ENCODE measurements at regions of chr22 and their contacts with region 1.

Region 1: DNA sequence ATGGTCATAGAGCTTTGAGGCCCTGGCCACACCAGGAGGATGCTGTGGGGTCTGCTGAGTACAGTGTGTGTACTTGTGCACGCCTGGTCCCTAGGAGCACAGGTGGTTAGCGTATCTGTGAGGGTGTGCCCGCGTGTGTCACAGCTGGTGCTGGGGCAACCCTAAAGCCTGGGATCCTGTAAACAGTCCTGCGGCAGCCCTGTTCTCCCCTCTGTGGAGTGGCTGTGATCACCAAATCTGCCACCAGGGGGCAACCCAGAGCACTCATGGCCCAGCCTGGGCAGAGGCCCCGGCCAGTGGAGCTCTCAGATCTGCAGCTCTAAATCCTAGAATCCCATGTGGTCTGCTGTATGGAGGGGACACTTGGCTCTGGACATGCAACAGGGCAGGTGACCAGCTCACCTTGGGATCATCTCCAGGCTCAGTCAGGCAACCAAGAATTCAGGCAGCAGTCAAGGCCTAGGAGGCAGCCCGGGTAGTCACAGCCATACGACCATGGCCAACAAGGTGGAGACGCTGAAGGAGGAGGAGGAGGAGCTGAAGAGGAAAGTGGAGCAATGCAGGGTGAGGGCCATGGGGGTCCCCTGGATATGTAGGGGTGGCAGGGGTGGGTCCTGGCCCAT is 3.9 kb downstream of the SH3BP1 start:
- DNase-seq: peak; percentile 62
- H3K4me3 ChIP-seq: no peak overlapping the region
- H3K27ac ChIP-seq: no peak overlapping the region
- H3K4me1 ChIP-seq: peaks cover 23% of the 10 kb centered on the region
- H3K27me3 ChIP-seq: no peaks in the 10 kb centered on the region
- CTCF ChIP-seq: peak; percentile 74 to 84

Region 2: DNA sequence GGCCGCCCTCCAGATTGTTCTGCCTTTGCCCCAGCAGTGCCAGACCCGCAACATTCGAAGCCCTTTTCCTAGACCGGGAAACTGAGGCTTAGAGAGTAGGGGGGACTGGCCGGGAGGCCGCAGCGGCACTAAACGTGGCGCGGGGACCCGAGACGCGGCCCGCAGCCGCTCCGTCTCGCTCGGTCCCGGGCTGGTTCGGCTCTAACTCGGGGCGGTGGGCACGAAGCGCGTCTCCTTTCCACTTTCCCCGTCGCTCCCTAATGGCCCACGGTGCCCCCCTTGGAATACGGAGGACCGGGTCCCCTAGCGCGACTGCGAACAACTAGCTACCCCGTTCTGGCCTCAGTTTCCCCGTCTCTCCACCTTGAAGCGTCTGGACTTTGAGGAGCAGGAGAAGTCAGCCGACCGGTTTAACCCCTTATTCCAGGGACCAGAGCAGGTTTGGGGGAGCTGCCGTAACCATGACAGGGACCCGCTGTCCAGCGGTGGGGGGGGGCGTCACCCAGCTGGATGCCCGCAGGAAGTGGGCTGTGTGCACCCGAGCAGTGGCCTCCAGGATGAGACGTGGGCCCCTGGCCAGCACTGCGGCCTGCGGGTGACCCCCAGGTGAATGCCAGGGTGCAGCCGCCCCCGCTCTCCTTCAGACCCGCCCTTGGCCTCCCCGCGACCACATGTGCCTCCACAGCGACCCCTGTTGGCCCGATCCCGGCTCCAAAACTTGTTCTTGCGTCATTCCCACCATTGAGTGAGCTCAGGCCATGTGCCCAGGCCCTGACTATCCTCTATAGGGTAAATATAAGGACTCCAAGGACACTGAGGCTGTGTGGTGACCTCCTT is 81.9 kb before region 1 on chr22:
- CTCF ChIA-PET with region 1: no interaction called
- dilution Hi-C with region 1: loop called (anchors 5 kb)
- in situ Hi-C with region 1: no loop called
- intact Hi-C with region 1: no loop called
- DNase-seq: peak; percentile 89
- H3K4me3 ChIP-seq: peak overlapping the region; percentile 71 to 91 (median 78)
- H3K27ac ChIP-seq: peak overlapping the region; percentile 90
- H3K4me1 ChIP-seq: peaks cover 46% of the 10 kb centered on the region
- H3K27me3 ChIP-seq: no peaks in the 10 kb centered on the region
- CTCF ChIP-seq: peak; percentile 79 to 88

Region 3: DNA sequence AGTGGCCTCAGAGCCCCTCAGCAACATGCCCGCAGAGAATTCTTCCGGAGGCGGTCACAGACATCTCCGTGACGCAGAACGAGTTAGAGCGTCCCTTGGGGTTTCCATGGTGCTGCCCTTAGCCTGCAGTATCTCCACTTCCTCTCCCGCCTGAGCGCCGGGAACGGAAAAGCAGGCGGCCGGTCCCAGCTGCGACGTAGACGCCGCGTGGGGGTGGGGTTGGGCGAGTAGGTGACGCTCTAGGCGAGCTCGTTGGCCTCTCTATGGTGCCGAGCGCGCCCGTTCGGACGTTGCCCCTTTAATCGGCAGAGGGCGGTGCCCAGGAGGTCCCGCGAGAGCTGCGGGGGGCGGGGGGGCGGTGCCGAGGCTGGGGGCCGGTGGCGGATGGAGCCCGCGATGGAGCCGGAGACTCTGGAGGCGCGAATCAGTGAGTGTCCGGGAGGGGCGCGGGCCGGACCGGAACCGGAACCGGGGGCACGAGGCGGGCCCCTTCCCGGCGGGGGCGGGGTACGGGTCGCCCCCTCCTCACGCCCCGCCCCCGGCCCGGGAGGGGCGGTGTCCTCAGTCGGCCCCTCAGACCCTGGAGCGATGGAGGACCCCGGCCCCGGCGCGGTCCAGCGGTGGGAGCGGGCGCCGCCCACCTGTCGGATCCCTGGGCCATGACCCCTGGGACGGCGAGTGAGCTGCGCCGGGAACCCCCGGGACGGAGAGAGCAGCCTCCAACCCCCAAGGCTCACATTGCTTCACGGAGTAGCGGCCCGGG is 34.7 kb before region 1 on chr22 and contains the start of gene GGA1:
- CTCF ChIA-PET with region 1: interaction called, 4 read pairs
- dilution Hi-C with region 1: loop called (anchors 5 kb)
- in situ Hi-C with region 1: no loop called
- intact Hi-C with region 1: loop called (anchors 1 kb)
- DNase-seq: peak; percentile 97
- H3K4me3 ChIP-seq: peak within 1 kb of the TSS; percentile 84 to 98 (median 98)
- H3K27ac ChIP-seq: peak within 1 kb of the TSS; percentile 99
- H3K4me1 ChIP-seq: peaks cover 19% of the 10 kb centered on the region
- H3K27me3 ChIP-seq: no peaks in the 10 kb centered on the region
- CTCF ChIP-seq: no peak
- total RNA-seq, gene GGA1: 33.8 to 60.2 TPM

Region 4: GRCh38 chr22:37658133-37659065 is 15.1 kb after region 1 on chr22 and contains the start of gene PDXP:
- CTCF ChIA-PET with region 1: interaction called, 9 read pairs
- dilution Hi-C with region 1: no loop called
- in situ Hi-C with region 1: no loop called
- intact Hi-C with region 1: loop called (anchors 2 kb)
- DNase-seq: peak; percentile 100
- H3K4me3 ChIP-seq: peak within 1 kb of the TSS; percentile 47 to 84 (median 55)
- H3K27ac ChIP-seq: peak within 1 kb of the TSS; percentile 41
- H3K4me1 ChIP-seq: peaks cover 21% of the 10 kb centered on the region
- H3K27me3 ChIP-seq: no peaks in the 10 kb centered on the region
- CTCF ChIP-seq: no peak
- total RNA-seq, gene PDXP: 5.8 to 6.9 TPM

Region 5: DNA sequence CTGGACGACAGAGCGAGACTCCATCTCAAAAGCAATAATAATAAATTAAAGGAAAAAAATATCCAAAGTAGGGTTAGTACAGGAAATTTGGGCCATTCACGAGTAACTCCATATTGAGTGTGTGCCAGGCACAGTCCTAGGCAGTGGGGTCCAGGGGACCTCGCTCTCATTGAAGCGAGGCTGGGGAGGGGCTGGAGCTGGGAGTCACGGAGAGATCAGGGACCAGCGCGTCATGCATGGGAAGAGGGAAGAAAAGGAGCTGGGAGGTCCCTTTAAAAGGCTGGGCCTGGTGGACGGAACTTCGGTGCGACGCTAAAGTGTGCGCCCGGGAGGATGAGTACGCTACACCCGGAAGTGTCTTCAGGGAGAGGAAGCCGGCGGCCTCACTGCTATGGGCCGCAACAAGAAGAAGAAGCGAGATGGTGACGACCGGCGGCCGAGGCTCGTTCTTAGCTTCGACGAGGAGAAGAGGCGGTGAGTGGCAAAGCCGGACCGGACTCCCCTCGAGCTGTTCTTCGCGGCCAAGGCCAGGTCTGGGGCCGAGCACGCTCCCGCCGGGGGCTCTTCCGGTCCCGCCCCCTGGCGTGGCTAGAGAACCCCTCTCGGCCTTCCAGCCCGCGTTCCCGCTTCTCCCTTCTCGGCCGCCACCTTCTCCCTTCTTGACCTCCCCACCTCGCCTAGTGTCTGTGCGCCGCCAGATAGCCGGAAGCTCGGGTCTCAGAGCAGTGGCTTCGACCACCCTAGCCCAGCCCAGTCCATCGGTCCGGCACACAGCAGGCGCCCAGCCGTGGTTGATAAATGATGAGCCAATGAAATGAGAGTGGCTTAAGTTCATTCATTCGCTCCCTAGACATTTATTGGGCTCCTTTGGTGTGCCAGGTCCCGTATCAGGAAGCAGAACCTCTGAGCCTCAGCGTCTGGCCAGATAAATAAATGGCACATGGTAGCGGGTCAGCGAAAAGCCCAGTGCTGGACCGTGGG is 43.0 kb after region 1 on chr22 and contains the start of gene NOL12:
- CTCF ChIA-PET with region 1: interaction called, 10 read pairs
- dilution Hi-C with region 1: loop called (anchors 5 kb)
- in situ Hi-C with region 1: loop called in 1 of 2 experiments (anchors 5 kb)
- intact Hi-C with region 1: loop called (anchors 1 kb)
- DNase-seq: peak; percentile 86
- H3K4me3 ChIP-seq: peak within 1 kb of the TSS; percentile 88 to 97 (median 91)
- H3K27ac ChIP-seq: peak within 1 kb of the TSS; percentile 77
- H3K4me1 ChIP-seq: peaks cover 44% of the 10 kb centered on the region
- H3K27me3 ChIP-seq: no peaks in the 10 kb centered on the region
- CTCF ChIP-seq: no peak
- total RNA-seq, gene NOL12: 8.0 to 32.4 TPM

Region 6: DNA sequence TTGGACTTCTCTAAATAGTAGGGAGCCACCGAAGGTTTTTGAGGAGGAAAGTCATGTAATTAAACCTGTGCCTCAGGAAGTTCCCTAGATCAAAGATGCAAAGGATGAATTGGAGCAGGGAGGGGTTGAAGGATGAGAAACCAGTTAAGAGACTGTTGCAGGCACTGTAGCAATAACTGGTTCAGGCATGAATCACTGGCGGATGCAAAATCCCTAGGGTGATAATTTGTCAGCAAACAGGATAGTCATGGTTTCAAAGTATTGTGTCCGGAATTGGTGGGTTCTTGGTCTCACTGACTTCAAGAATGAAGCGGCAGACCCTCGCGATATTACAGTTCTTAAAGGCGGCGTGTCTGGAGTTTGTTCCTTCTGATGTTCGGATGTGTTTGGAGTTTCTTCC is 73.4 kb after region 1 on chr22:
- CTCF ChIA-PET with region 1: no interaction called
- dilution Hi-C with region 1: no loop called
- in situ Hi-C with region 1: no loop called
- intact Hi-C with region 1: no loop called
- DNase-seq: peak; percentile 80
- H3K4me3 ChIP-seq: peak overlapping the region in 1 of 3 experiments; percentile 15
- H3K27ac ChIP-seq: peak overlapping the region; percentile 47
- H3K4me1 ChIP-seq: peaks cover 6% of the 10 kb centered on the region
- H3K27me3 ChIP-seq: no peaks in the 10 kb centered on the region
- CTCF ChIP-seq: no peak

Region 7: GRCh38 chr22:37734964-37735451 is 91.7 kb after region 1 on chr22:
- CTCF ChIA-PET with region 1: no interaction called
- dilution Hi-C with region 1: no loop called
- in situ Hi-C with region 1: no loop called
- intact Hi-C with region 1: loop called (anchors 2 kb)
- DNase-seq: no peak
- H3K4me3 ChIP-seq: no peak overlapping the region
- H3K27ac ChIP-seq: no peak overlapping the region
- H3K4me1 ChIP-seq: peaks cover under 1% of the 10 kb centered on the region
- H3K27me3 ChIP-seq: no peaks in the 10 kb centered on the region
- CTCF ChIP-seq: peak in 1 of 2 donors; percentile 33

Region 8: DNA sequence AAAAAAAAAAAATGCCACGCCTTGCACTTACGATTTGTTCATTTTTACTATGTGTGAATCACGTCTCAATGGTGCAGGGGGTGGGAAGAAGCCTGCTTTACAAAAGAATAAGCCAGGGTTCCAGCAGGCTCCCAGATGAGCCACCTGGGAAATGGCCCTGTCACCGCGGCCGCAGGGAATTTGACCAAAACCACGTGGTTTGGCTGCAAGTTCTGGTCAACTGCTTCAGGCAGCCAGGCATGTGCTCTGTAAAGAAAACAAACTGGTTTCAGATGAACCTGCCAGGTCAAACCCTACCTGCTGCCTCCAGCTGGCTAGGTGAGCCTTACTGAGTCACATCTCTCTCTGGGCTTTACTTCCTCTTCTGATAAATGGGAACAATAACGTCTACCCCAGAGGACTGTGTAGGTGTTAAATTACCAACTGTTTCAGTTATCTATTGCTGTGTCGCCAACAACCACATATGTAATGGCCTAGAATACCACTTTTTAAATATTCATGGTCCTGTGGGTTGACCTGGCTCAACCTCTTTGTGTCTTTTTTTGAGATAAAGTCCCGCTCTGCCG is 133.9 kb after region 1 on chr22:
- CTCF ChIA-PET with region 1: no interaction called
- dilution Hi-C with region 1: no loop called
- in situ Hi-C with region 1: loop called in 1 of 2 experiments (anchors 10 kb)
- intact Hi-C with region 1: no loop called
- DNase-seq: peak; percentile 99
- H3K4me3 ChIP-seq: no peak overlapping the region
- H3K27ac ChIP-seq: peak overlapping the region; percentile 99
- H3K4me1 ChIP-seq: peaks cover 40% of the 10 kb centered on the region
- H3K27me3 ChIP-seq: no peaks in the 10 kb centered on the region
- CTCF ChIP-seq: no peak